Ovary (tissue), 10 donors: ENCODE measurements at regions of chr12 and their contacts with region 1.

Region 1: DNA sequence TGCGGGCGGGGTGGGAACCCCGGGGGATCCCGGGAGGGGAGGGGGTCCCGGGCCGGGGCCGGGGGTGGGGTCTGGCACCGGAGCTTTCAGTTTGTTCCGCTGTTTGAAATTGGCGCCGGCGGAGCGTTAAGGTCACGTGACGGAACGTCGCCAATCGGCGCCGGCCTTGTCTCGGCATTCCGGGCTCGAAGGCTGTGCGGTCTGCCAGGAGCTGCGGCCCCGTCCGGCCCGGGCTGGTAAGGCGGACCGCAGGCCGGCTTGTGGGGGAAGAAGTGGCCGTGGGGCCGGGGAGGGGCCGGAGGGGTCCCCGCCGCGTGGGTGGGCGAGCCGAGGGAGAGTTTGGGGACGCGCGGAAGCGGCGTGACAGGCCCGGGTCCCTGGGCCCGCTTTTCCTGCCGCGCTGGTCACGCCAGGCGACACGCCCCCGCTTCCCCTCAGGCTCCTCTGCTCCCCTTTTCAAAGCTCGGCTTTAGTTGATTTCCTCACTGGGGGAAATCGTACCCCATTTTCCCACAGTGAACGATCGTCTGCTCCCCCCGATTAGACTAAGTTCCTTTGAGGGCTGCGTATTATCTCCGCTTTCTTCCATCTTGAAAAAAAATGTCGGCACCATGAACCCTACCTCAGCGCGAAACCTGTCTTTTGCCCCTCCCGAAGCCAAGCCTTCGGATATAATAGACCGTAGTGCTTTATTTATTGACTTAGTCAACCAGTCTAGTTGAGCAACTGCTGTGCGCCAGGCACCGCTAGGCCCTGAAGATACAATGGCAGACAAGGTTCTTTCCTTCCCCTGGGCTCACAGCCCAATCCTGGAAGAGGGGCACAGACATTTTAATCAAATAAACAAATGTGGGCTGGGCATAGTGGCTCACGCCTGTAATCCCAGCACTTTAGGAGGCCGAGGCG is at the starts of genes FOXM1 and RHNO1:
- DNase-seq: peak; percentile 90 to 95 (median 93)
- H3K4me3 ChIP-seq: peak within 1 kb of the TSS; percentile 94
- H3K27ac ChIP-seq: peak within 1 kb of the TSS; percentile 71 to 78
- H3K4me1 ChIP-seq: peaks cover 5% of the 10 kb centered on the region
- H3K27me3 ChIP-seq: no peaks in the 10 kb centered on the region
- CTCF ChIP-seq: peak in 1 of 3 donors; percentile 14
- EP300 ChIP-seq: no peak
- POLR2A ChIP-seq: peak; percentile 52
- total RNA-seq, gene FOXM1: 0.22 to 2.5 (median 0.36) TPM in 5 of 7 donors, not detected in the others
- total RNA-seq, gene RHNO1: 10.1 to 21.9 (median 18.7) TPM

Region 2: DNA sequence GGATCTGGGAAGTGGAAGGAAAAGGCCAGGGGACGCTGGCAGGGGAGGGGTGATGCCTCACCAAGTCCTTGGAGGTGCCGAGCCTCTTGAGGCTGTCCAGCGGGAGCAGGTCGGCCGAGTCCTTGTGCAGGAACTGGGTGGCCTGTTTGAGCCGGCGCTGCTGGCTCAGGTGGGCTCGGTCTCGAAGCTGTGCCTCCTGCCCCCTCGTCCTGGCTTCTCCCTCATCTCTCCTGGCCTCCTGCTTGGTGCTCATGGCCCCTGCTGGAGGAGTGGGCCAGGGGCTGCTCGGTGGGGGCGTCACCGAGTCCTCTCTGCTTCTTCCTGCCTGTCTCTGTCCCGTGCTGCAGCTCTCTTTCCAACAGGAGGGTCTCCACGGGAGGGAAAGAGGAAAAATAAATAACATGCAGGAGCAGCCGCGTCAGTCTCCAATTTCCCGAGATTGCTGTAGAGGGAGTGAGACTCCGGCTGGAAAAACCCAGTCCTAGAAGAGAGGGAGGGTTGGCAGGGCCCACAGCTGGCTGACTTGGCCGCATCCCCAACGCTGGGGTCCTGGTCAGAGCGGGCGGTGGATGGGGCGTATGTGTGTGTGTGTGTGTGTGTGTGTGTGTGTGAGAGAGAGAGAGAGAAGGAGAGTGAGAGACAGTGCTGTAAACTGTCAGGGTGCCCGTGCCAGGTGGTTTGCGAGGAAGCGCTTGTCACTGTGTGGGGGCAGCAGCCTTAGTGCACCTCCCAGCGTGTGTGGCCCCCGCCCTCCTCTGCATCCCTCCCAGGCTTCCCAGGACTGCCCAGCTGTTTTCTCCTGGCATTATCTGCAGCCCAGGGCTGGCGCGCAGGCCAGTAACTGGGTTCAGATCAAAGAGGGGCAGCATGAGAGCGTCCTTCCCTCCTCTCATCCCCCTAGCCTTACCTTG is 42.5 kb before region 1 on chr12 and contains the start of gene NRIP2:
- intact Hi-C with region 1: loop called in 1 of 4 experiments (anchors 10 kb)
- DNase-seq: peak; percentile 72 to 86 (median 86)
- H3K4me3 ChIP-seq: peak within 1 kb of the TSS; percentile 27
- H3K27ac ChIP-seq: peak within 1 kb of the TSS; percentile 60 to 61
- H3K4me1 ChIP-seq: peaks cover 10% of the 10 kb centered on the region
- H3K27me3 ChIP-seq: no peaks in the 10 kb centered on the region
- CTCF ChIP-seq: peak in 1 of 3 donors; percentile 17
- EP300 ChIP-seq: no peak
- POLR2A ChIP-seq: no peak
- total RNA-seq, gene NRIP2: 0.83 to 15.1 (median 6.3) TPM

Region 3: GRCh38 chr12:3034067-3034750 is 156.9 kb after region 1 on chr12:
- intact Hi-C with region 1: loop called in 1 of 4 experiments (anchors 10 kb)
- DNase-seq: peak; percentile 31 to 69 (median 51)
- H3K4me3 ChIP-seq: no peak overlapping the region
- H3K27ac ChIP-seq: no peak overlapping the region
- H3K4me1 ChIP-seq: no peaks in the 10 kb centered on the region
- H3K27me3 ChIP-seq: no peaks in the 10 kb centered on the region
- CTCF ChIP-seq: peak in 2 of 3 donors; percentile 23 to 27
- EP300 ChIP-seq: no peak
- POLR2A ChIP-seq: no peak

Region 4: DNA sequence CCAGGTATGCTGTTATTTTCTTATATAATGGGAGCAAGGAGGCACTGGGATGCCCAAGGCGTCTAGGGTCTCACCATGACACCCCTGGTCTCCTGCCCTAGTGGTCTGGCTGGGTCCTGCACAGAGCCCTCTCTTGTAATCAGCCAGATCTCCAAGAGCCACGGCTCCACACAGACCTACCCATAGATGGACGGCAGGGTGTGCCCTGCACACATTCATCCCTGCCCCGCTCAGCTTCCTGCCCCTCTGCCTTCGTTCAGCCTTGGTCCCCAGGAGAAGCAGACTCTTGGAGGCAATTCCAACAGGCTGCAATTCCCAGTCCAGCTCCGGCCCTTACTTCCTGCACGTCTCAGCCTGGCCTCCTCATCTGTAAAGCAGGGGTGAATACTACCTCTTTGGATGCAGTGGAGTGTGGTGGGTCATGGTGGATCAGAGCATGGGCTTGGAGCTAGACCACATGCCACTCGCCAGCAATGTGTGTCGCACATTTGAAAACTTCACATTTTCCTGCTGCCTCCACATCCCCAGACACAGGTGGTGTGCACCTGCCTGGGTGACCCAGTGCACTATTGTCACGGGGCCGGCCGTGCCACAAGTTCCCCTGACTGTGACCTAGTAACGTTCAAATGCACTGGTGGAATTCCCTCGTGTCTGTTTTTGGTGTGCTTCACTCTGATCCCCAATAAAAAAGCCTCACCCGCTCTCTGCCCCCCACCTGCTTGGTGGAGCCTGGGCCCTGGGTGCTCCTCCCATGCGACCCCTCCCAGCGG is 442.6 kb after region 1 on chr12:
- intact Hi-C with region 1: no loop called
- DNase-seq: no peak
- H3K4me3 ChIP-seq: no peak overlapping the region
- H3K27ac ChIP-seq: no peak overlapping the region
- H3K4me1 ChIP-seq: peaks cover 3% of the 10 kb centered on the region
- H3K27me3 ChIP-seq: no peaks in the 10 kb centered on the region
- CTCF ChIP-seq: no peak
- EP300 ChIP-seq: no peak
- POLR2A ChIP-seq: no peak